KBM-7 (cell line): ENCODE measurements at regions of chr7 and their contacts with region 1.

Region 1: DNA sequence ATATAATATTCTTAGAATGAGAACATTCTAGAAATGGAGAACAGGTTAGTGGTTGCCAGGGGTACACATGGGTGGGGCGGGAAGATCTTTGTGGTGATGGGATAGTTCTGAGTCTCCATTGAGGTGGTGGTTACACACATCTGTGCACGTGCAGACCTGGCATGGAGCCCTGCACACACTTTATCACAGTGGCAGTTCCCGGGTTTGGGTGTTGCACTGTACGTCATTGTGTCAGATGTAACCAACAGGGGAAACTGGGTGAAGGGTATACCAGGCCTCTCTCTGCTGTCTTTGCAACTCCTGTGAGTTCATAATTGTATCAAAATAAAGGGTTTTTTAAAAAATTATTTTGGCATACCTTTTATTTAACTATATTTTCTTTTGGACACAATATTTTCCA is 51.1 kb downstream of the LMTK2 start:
- DNase-seq: no peak

Region 2: GRCh38 chr7:97872025-97872669 is 285.6 kb before region 1 on chr7 and contains the start of gene ASNS:
- in situ Hi-C with region 1: no loop called
- DNase-seq: peak; percentile 87

Region 3: DNA sequence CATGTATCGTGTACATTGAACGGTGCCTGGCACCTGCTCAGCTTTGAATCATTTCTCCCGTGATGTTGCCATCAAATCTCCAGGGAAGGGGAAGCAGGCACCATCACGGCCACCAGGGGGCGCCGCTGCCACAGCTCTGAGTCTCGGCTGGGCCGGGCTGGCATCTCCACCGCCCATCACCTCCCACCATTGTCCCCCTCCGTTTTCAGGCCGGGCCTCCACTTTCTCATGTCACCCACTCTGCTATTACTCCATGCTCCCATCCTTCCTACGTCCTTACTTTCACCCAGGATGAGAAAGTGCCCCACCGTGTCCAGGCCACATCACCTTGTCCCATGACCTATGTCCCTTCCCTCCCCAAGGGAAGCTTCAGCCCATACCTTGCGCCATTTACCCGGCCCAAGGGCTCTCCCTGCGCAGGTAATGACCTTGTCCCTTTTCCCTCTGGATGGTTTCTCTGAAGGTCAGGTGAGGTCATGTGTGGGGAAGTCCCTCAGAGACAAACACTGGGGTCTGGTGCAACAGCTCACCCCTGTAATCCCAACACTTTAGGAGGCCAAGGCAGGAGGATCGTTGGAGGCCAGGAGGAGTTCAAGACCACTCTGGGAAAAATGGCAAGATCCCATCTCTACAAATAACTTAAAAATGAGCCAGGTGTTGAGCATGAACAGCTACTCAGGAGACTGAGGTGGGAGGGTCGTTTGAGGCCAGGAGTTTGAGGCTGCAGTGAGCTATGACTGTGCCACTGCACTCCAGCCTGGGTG is 136.0 kb before region 1 on chr7:
- in situ Hi-C with region 1: loop called (anchors 10 kb)
- DNase-seq: peak; percentile 77